ENCODE measurements at regions of chr12 and their contacts with region 1.

Region 1: DNA sequence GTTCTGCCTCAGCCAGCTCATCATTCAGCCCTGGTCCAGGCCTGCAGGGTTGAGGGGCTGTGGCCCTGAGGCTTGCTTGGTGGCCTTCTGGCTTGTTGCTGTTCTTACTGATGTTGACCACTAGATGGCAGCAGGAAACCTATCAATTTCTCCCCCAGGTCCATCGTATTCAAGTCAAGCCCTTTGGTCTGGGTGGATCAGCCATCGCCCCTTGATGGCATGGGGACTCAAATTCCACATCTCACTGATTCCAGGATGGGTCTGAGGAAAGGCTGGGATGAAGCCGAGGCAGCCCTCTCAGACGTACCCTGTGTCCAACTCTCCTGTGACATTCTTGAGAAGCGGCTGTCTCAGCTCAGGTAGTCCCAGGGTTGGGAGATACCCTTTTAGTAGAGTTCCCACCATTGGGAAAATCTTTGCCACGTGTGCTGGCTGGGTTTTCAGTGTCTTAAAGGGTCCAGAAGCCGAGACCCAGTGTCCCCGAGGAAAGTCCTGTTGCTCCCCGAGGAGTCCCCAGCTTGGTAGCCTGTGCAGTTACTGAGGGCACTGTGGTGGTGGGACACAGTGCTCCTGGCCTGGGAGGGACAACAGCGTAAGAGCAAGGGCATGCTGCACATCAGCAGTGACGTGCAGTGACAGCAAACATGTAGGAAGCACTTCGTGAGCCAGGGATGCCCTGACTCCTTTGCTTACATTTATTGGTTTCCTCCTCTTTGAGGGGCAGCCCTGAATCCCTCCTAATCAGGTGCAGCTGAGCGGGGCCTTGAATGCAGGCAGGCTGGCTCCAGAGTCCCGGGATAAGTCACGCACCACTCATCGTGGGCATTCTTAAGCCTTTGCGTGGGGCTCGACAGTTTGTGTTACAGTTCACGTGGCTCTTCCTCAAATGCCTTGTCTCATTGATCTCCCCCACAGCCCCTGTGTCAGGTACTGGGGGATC is 58.6 kb downstream of the TSPAN9 start:
- DNase-seq: peak; percentile 76 to 77
- H3K4me3 ChIP-seq: no peak overlapping the region
- H3K4me3 Mint-ChIP-seq: no peak overlapping the region
- H3K27ac Mint-ChIP-seq: no peak overlapping the region
- H3K4me1 ChIP-seq: no peaks in the 10 kb centered on the region
- H3K4me1 Mint-ChIP-seq: no peaks in the 10 kb centered on the region
- H3K27me3 ChIP-seq: no peaks in the 10 kb centered on the region
- H3K27me3 Mint-ChIP-seq: no peaks in the 10 kb centered on the region
- CTCF ChIP-seq: peak; percentile 85 to 94

Region 2: GRCh38 chr12:3242199-3242863 is 106.5 kb after region 1 on chr12:
- CTCF ChIA-PET with region 1: interaction called, 15 read pairs
- POLR2A ChIA-PET with region 1: no interaction called
- intact Hi-C with region 1: no loop called
- DNase-seq: peak in 1 of 2 experiments; percentile 43
- H3K4me3 ChIP-seq: no peak overlapping the region
- H3K4me3 Mint-ChIP-seq: no peak overlapping the region
- H3K27ac Mint-ChIP-seq: peak overlapping the region; percentile 11
- H3K4me1 ChIP-seq: peaks cover 24% of the 10 kb centered on the region
- H3K4me1 Mint-ChIP-seq: peaks cover 13% of the 10 kb centered on the region
- H3K27me3 ChIP-seq: no peaks in the 10 kb centered on the region
- H3K27me3 Mint-ChIP-seq: no peaks in the 10 kb centered on the region
- CTCF ChIP-seq: peak in 1 of 2 experiments; percentile 7

Region 3: GRCh38 chr12:3275171-3276041 is 139.6 kb after region 1 on chr12:
- CTCF ChIA-PET with region 1: interaction called, 49 read pairs
- POLR2A ChIA-PET with region 1: no interaction called
- intact Hi-C with region 1: loop called (anchors 1 kb)
- DNase-seq: peak; percentile 68 to 86
- H3K4me3 ChIP-seq: no peak overlapping the region
- H3K4me3 Mint-ChIP-seq: no peak overlapping the region
- H3K27ac Mint-ChIP-seq: no peak overlapping the region
- H3K4me1 ChIP-seq: no peaks in the 10 kb centered on the region
- H3K4me1 Mint-ChIP-seq: no peaks in the 10 kb centered on the region
- H3K27me3 ChIP-seq: no peaks in the 10 kb centered on the region
- H3K27me3 Mint-ChIP-seq: no peaks in the 10 kb centered on the region
- CTCF ChIP-seq: peak; percentile 99

Measured in Caco-2 (cell line).